ENCODE measurements at regions of chr6 and their contacts with region 1.

Region 1: GRCh38 chr6:159701411-159701999 is 8.5 kb upstream of the SOD2 start:
- DNase-seq: peak in 1 of 2 donors; percentile 78
- H3K4me3 ChIP-seq: no peak overlapping the region
- H3K27ac ChIP-seq: peak overlapping the region; percentile 80 to 86
- H3K4me1 ChIP-seq: peaks cover 5 to 17% of the 10 kb centered on the region in 2 donors
- H3K27me3 ChIP-seq: no peaks in the 10 kb centered on the region
- CTCF ChIP-seq: no peak

Region 2: GRCh38 chr6:159390381-159390780 is 311.1 kb before region 1 on chr6:
- intact Hi-C with region 1: no loop called
- DNase-seq: no peak
- H3K4me3 ChIP-seq: no peak overlapping the region
- H3K27ac ChIP-seq: no peak overlapping the region
- H3K4me1 ChIP-seq: peaks cover 3 to 10% of the 10 kb centered on the region in 2 donors
- H3K27me3 ChIP-seq: no peaks in the 10 kb centered on the region
- CTCF ChIP-seq: no peak

Region 3: DNA sequence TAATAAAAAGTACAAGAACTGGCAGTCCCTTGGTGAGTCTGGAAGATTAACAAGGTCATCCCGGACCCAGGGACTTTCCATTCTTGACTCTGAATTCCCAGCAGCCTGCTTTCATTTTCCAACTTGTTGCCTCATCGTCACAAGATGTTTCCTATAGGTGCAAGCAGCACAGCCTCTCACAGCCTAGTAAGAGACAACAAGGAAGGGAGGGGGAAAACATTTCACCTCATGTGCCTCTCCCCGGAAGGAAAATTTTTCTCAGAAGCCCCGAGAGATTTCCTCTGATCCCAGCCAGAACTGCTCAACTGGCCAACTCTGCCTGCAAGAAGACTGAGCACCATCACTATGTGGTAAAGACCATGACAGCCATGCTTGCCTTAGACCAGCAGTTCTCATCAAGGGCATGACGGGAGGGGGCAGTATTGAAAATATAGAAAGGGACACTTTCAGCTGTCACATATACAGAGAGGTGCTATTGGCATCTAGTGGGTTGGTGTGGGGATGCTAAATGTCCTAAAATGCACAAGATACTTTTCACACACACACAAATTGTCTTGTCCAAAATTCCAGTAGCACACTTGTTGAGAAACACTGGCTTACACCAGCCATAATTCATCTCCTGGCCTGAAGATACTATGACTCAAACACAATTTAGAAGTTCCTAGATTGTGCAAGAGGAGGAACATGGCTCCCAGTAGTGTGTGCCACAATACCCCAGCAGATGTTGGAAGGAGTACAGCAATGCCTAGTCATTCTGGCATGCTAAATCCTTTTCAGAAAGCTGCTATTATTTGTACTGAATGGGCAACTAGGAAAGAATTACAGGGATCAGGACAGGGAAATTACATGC is 15.0 kb after region 1 on chr6:
- intact Hi-C with region 1: loop called (anchors 1 kb)
- DNase-seq: peak in 1 of 2 donors; percentile 87
- H3K4me3 ChIP-seq: peak overlapping the region; percentile 11 to 18
- H3K27ac ChIP-seq: peak overlapping the region; percentile 66 to 85
- H3K4me1 ChIP-seq: peaks cover 6 to 15% of the 10 kb centered on the region in 2 donors
- H3K27me3 ChIP-seq: no peaks in the 10 kb centered on the region
- CTCF ChIP-seq: no peak